Endothelial cell of umbilical vein (primary cell): ENCODE measurements at regions of chr2 and their contacts with region 1.

Region 1: GRCh38 chr2:162073888-162074645 is at the start of gene DPP4:
- DNase-seq: peak; percentile 26
- H3K4me3 ChIP-seq: peak within 1 kb of the TSS; percentile 57 to 68 (median 58)
- H3K27ac ChIP-seq: no peak within 1 kb of the TSS
- H3K4me1 ChIP-seq: peaks cover 26% of the 10 kb centered on the region
- H3K27me3 ChIP-seq: no peaks in the 10 kb centered on the region
- CTCF ChIP-seq: no peak
- POLR2A ChIP-seq: no peak
- total RNA-seq, gene DPP4: 3.0 and 6.2 TPM in 2 replicates

Region 2: GRCh38 chr2:162037028-162037795 is 36.9 kb before region 1 on chr2:
- CTCF ChIA-PET with region 1: interaction called, 5 read pairs
- POLR2A ChIA-PET with region 1: no interaction called
- dilution Hi-C with region 1: no loop called
- intact Hi-C with region 1: loop called (anchors 2 kb)
- DNase-seq: peak; percentile 30
- H3K4me3 ChIP-seq: no peak overlapping the region
- H3K27ac ChIP-seq: no peak overlapping the region
- H3K4me1 ChIP-seq: peaks cover 19% of the 10 kb centered on the region
- H3K27me3 ChIP-seq: no peaks in the 10 kb centered on the region
- CTCF ChIP-seq: no peak
- POLR2A ChIP-seq: no peak

Region 3: GRCh38 chr2:162091325-162092007 is 17.4 kb after region 1 on chr2:
- CTCF ChIA-PET with region 1: interaction called, 11 read pairs
- POLR2A ChIA-PET with region 1: no interaction called
- dilution Hi-C with region 1: no loop called
- intact Hi-C with region 1: loop called (anchors 1 kb)
- DNase-seq: peak; percentile 41
- H3K4me3 ChIP-seq: no peak overlapping the region
- H3K27ac ChIP-seq: peak overlapping the region; percentile 89
- H3K4me1 ChIP-seq: peaks cover 40% of the 10 kb centered on the region
- H3K27me3 ChIP-seq: no peaks in the 10 kb centered on the region
- CTCF ChIP-seq: no peak
- POLR2A ChIP-seq: no peak